ENCODE measurements at regions of chr1 and their contacts with region 1.

Region 1: DNA sequence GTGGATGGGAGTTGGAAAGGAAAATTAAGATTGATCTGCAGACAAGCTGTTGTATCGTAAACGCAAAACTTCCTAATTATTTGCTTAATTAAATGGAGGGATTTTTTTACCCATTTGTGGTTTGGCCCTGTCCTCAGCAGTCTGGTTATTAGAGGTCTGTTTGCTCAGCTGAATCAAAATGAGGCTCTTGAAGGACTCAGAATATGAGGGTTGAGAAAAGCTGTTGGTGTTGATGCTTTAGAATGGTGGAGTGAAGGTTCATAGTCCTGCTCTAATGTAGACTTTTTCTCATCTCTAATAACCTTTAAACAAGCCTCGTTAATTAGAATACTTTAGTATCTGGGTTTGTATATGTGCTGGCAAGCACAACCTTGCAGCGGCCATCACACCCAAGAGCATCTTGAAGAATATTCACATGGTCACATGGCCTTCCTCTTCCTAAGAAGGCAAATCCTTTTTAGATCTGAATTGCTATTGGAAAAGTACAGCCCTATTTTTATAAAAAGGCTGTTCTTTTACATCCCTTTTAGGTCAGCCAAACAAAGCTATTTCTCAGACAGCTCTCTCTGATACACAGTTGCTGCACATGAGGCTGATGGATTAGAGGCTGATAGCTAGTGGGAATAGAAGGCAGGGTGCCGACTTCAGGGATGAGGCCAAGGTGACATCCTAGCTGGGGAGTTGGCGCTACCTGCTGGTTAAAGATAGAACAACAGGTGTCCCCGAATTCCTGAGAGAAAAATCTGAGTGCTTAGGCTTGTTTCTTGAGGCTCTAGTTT is 53.8 kb downstream of the MACF1 start:
- DNase-seq: peak; percentile 41 to 73 (median 54)
- ATAC-seq: peak; percentile 84
- H3K4me3 ChIP-seq: no peak overlapping the region
- H3K4me3 Mint-ChIP-seq: peak overlapping the region in 1 of 10 donors; percentile 46
- H3K27ac ChIP-seq: peak overlapping the region; percentile 11
- H3K27ac Mint-ChIP-seq: peak overlapping the region in 7 of 9 donors; percentile 11 to 68 (median 53)
- H3K4me1 ChIP-seq: peaks cover 17 to 25% of the 10 kb centered on the region in 2 donors
- H3K4me1 Mint-ChIP-seq: peaks cover 21 to 52% (median 35%) of the 10 kb centered on the region in 7 donors
- H3K27me3 ChIP-seq: no peaks in the 10 kb centered on the region
- H3K27me3 Mint-ChIP-seq: no peaks in the 10 kb centered on the region

Region 2: GRCh38 chr1:39129514-39129913 is 128.8 kb before region 1 on chr1:
- CTCF ChIA-PET with region 1: interaction called, 3 read pairs
- POLR2A ChIA-PET with region 1: no interaction called
- intact Hi-C with region 1: loop called in 1 of 2 experiments (anchors 1 kb)
- DNase-seq: peak in 1 of 9 donors; percentile 7
- ATAC-seq: no peak
- H3K4me3 ChIP-seq: no peak overlapping the region
- H3K4me3 Mint-ChIP-seq: no peak overlapping the region
- H3K27ac ChIP-seq: no peak overlapping the region
- H3K27ac Mint-ChIP-seq: no peak overlapping the region
- H3K4me1 ChIP-seq: no peaks in the 10 kb centered on the region
- H3K4me1 Mint-ChIP-seq: peaks cover 0 to 17% (median 7%) of the 10 kb centered on the region in 7 donors
- H3K27me3 ChIP-seq: no peaks in the 10 kb centered on the region
- H3K27me3 Mint-ChIP-seq: peaks cover 0 to 3% (median 0%) of the 10 kb centered on the region in 5 donors

Region 3: DNA sequence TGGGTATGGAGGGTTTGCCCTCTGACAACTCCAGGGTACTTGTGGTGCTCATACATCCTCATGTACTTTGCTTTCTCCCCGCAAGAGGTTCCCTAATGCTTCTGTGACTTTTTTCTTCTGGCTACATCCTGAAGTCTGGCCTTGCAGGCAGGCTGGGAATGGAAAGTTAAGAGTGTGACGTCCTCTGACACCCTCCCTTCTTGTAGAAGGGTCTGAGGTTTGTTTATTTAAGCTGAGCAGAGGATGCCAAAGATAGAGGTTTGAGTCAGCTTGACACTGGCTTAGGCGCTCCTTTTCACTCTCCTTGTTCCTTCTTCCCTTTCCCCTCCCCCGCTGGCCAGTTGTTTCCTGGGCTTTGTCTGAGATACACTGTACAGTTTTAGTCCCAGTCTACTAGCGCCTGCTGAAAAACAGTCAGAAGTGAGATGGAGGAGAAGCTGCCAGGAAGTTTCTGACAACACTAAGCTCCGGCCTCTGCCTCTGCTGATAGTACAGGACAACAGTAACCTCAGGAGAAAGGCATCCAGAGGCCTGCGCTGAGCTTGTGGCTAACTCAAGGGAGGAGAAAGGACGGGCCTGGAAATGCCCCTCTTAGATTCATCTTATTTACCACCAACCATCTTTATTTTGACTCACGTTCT is 53.8 kb before region 1 on chr1 and contains the start of gene MACF1:
- CTCF ChIA-PET with region 1: interaction called, 56 read pairs
- POLR2A ChIA-PET with region 1: interaction called, 6 read pairs
- intact Hi-C with region 1: no loop called
- DNase-seq: peak in 2 of 9 donors; percentile 49 to 68
- ATAC-seq: peak; percentile 39
- H3K4me3 ChIP-seq: peak within 1 kb of the TSS; percentile 61
- H3K4me3 Mint-ChIP-seq: peak within 1 kb of the TSS; percentile 83 to 99 (median 88)
- H3K27ac ChIP-seq: peak within 1 kb of the TSS; percentile 66
- H3K27ac Mint-ChIP-seq: peak within 1 kb of the TSS; percentile 82 to 98 (median 92)
- H3K4me1 ChIP-seq: peaks cover 19 to 23% of the 10 kb centered on the region in 2 donors
- H3K4me1 Mint-ChIP-seq: peaks cover 38 to 83% (median 74%) of the 10 kb centered on the region in 7 donors
- H3K27me3 ChIP-seq: no peaks in the 10 kb centered on the region
- H3K27me3 Mint-ChIP-seq: no peaks in the 10 kb centered on the region
- total RNA-seq, gene MACF1: 282 to 409 (median 335) TPM

Region 4: DNA sequence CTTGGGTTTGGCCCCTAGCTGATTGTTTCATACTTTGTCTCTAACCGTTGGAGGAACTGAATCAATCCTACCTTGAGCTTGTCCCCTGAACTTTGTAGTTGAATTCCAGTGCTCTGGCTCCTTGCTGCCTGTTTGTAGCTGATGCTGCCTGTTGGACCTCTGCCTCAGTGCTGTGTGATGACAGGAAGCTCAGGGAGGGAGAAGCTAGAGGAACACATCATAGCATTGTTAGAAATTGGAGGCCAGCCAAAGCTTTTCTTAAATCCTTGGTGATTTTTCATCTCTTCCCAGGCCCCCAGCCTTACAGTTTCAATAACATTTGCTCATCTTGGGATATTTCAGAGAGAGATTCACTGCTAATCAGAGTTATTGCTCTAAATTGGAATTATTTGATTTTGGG is 19.9 kb before region 1 on chr1:
- CTCF ChIA-PET with region 1: interaction called, 15 read pairs
- POLR2A ChIA-PET with region 1: interaction called, 3 read pairs
- intact Hi-C with region 1: no loop called
- DNase-seq: no peak
- ATAC-seq: no peak
- H3K4me3 ChIP-seq: no peak overlapping the region
- H3K4me3 Mint-ChIP-seq: peak overlapping the region in 5 of 10 donors; percentile 5 to 40 (median 26)
- H3K27ac ChIP-seq: no peak overlapping the region
- H3K27ac Mint-ChIP-seq: peak overlapping the region; percentile 13 to 88 (median 72)
- H3K4me1 ChIP-seq: peaks cover 2 to 14% of the 10 kb centered on the region in 2 donors
- H3K4me1 Mint-ChIP-seq: peaks cover 33 to 67% (median 57%) of the 10 kb centered on the region in 7 donors
- H3K27me3 ChIP-seq: no peaks in the 10 kb centered on the region
- H3K27me3 Mint-ChIP-seq: no peaks in the 10 kb centered on the region

Region 5: DNA sequence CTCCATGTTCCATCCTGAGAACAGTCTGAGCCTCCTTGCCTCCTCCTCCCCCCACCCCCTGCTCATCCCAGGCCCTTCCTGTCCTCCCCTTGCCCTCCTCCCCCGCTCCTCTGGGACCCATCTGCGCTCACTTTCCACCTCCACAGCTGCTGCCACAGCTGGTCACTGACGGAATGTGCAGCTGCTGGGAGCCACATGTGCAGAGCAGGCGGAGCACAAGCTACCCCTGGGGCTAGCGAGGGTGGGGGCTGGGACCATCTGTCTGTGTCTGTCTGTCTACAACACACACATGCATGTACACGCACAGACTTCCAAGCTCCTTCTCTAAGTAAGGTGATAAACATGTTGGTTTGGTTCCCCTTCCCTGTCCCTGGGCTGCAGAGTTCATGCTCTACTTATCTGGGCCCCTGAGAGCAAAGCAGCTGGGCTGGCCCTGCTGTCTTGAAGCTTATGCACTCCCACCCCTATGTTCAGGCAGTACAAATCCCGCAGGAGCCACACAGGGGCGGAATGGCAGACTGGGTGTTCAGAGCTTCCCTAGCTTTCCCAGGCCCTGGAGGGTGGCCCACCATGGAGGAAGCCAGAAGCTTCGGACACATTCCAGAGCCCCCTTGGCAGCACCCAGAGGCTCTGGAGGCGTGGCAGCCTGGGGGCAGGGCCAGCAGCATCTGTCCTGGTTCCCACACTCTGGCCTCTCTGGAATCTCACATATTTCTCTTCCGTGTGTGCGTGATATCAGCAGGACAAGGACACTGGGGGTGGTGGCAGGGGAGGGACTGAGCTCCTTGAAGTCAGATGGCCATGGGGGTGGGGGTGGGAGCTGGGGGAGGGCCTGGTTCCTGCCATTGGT is 388.1 kb after region 1 on chr1:
- CTCF ChIA-PET with region 1: no interaction called
- POLR2A ChIA-PET with region 1: no interaction called
- intact Hi-C with region 1: no loop called
- DNase-seq: no peak
- ATAC-seq: no peak
- H3K4me3 ChIP-seq: no peak overlapping the region
- H3K4me3 Mint-ChIP-seq: no peak overlapping the region
- H3K27ac ChIP-seq: no peak overlapping the region
- H3K27ac Mint-ChIP-seq: no peak overlapping the region
- H3K4me1 ChIP-seq: no peaks in the 10 kb centered on the region
- H3K4me1 Mint-ChIP-seq: no peaks in the 10 kb centered on the region
- H3K27me3 ChIP-seq: no peaks in the 10 kb centered on the region
- H3K27me3 Mint-ChIP-seq: peaks cover 0 to 21% (median 0%) of the 10 kb centered on the region in 5 donors